PC-9 (cell line): ENCODE measurements at regions of chr12 and their contacts with region 1.

Region 1: GRCh38 chr12:75447691-75448393 is 32.7 kb upstream of the GLIPR1 start:
- DNase-seq: no peak
- H3K4me3 ChIP-seq: no peak overlapping the region
- H3K27ac ChIP-seq: no peak overlapping the region
- H3K4me1 ChIP-seq: peaks cover 11% of the 10 kb centered on the region
- H3K27me3 ChIP-seq: no peaks in the 10 kb centered on the region
- CTCF ChIP-seq: no peak

Region 2: DNA sequence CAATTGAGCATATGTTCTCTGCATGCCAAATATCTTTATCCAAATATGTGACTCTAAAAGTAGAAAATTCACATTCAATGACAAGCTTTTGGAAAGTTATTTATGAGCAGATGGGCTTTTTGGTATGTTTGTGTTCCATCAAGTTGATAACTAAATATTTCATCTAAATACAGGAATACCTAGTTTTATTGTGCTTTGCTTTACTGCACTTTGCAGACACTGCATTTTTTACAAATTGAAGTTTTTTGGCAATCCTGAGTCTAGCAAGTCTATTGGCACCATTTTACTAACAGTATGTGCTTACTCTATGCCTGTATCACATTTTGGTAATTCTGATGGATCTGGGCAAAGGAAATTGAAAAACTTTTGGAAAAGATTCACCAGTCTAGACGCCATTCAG is 776.4 kb before region 1 on chr12:
- CTCF ChIA-PET with region 1: no interaction called
- POLR2A ChIA-PET with region 1: no interaction called
- intact Hi-C with region 1: no loop called
- DNase-seq: no peak
- H3K4me3 ChIP-seq: no peak overlapping the region
- H3K27ac ChIP-seq: no peak overlapping the region
- H3K4me1 ChIP-seq: no peaks in the 10 kb centered on the region
- H3K27me3 ChIP-seq: no peaks in the 10 kb centered on the region
- CTCF ChIP-seq: no peak

Region 3: DNA sequence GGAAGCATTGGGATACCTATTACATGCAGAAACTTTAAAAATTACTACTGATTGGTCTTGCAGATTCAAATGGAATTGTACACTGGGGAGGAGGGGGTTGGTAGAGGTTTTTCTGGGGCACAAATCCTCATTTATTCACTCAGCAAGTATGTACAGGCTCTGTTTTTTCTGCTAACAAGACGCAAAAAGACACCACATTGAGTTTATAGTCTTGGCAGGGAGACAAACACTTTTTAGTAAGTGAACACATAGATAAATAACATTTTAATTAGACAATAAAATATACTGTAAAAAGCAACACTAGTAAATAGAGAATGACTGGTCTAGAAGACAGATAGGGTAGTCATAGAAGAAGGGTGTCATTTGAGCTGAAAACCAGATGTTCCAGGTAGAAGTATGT is 33.2 kb before region 1 on chr12:
- CTCF ChIA-PET with region 1: no interaction called
- POLR2A ChIA-PET with region 1: no interaction called
- intact Hi-C with region 1: loop called (anchors 1 kb)
- DNase-seq: no peak
- H3K4me3 ChIP-seq: no peak overlapping the region
- H3K27ac ChIP-seq: no peak overlapping the region
- H3K4me1 ChIP-seq: no peaks in the 10 kb centered on the region
- H3K27me3 ChIP-seq: no peaks in the 10 kb centered on the region
- CTCF ChIP-seq: no peak